Activated naive CD4-positive, alpha-beta T cell treated with anti-CD3 and anti-CD28 coated beads, Interleukin-2, amount 10 ng/mL, durations not matched to agents 7 days and 5 days (primary cell): ENCODE measurements at regions of chr3 and their contacts with region 1.

Region 1: GRCh38 chr3:157130467-157131251 is 29.3 kb downstream of the CCNL1 start:
- DNase-seq: peak; percentile 86
- H3K4me3 Mint-ChIP-seq: peak overlapping the region; percentile 29
- H3K27ac Mint-ChIP-seq: peak overlapping the region; percentile 98
- H3K4me1 Mint-ChIP-seq: peaks cover 88% of the 10 kb centered on the region
- H3K27me3 Mint-ChIP-seq: no peaks in the 10 kb centered on the region

Region 2: GRCh38 chr3:157081681-157082210 is 48.9 kb before region 1 on chr3:
- CTCF ChIA-PET with region 1: interaction called, 66 read pairs
- DNase-seq: peak; percentile 87
- H3K4me3 Mint-ChIP-seq: no peak overlapping the region
- H3K27ac Mint-ChIP-seq: no peak overlapping the region
- H3K4me1 Mint-ChIP-seq: peaks cover 42% of the 10 kb centered on the region
- H3K27me3 Mint-ChIP-seq: peaks cover 4% of the 10 kb centered on the region

Region 3: GRCh38 chr3:157088601-157089454 is 41.8 kb before region 1 on chr3:
- CTCF ChIA-PET with region 1: interaction called, 66 read pairs
- DNase-seq: peak; percentile 96
- H3K4me3 Mint-ChIP-seq: peak overlapping the region; percentile 79
- H3K27ac Mint-ChIP-seq: peak overlapping the region; percentile 99
- H3K4me1 Mint-ChIP-seq: peaks cover 58% of the 10 kb centered on the region
- H3K27me3 Mint-ChIP-seq: peaks cover 4% of the 10 kb centered on the region